Panc1 (cell line): ENCODE measurements at regions of chr1 and their contacts with region 1.

Region 1: GRCh38 chr1:200231787-200232231 is 178.0 kb downstream of the ZNF281 start:
- DNase-seq: no peak
- ATAC-seq: no peak
- H3K4me3 ChIP-seq: no peak overlapping the region
- H3K27ac ChIP-seq: no peak overlapping the region
- H3K4me1 ChIP-seq: no peaks in the 10 kb centered on the region
- H3K27me3 ChIP-seq: no peaks in the 10 kb centered on the region
- CTCF ChIP-seq: no peak

Region 2: DNA sequence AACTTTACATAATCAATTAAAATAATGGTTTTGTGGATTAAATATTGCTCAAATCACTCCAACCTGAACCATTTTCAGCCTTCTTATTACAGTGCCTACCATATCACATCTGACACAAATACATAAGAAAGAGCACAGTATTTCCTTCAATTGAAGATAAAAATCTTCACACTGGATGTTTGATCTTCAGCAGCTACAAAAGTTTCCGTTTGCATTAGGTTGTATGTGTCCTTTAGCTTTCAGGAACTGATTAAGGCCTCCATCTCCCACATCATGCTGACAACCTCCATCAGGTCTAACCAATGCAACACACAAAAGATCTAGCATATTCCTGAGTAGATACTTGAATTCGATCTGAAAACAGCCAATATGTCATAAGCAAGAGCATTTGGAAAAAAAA is 399.4 kb before region 1 on chr1:
- CTCF ChIA-PET with region 1: no interaction called
- POLR2A ChIA-PET with region 1: no interaction called
- in situ Hi-C with region 1: loop called (anchors 10 kb)
- intact Hi-C with region 1: no loop called
- DNase-seq: no peak
- ATAC-seq: no peak
- H3K4me3 ChIP-seq: no peak overlapping the region
- H3K27ac ChIP-seq: no peak overlapping the region
- H3K4me1 ChIP-seq: no peaks in the 10 kb centered on the region
- H3K27me3 ChIP-seq: no peaks in the 10 kb centered on the region
- CTCF ChIP-seq: no peak